Activated naive CD4-positive, alpha-beta T cell treated with anti-CD3 and anti-CD28 coated beads for 36 hours (primary cell): ENCODE measurements at regions of chr4 and their contacts with region 1.

Region 1: GRCh38 chr4:152771741-152772533 is 7.6 kb downstream of the TIGD4 start:
- DNase-seq: no peak
- H3K4me3 Mint-ChIP-seq: no peak overlapping the region
- H3K27ac Mint-ChIP-seq: no peak overlapping the region
- H3K4me1 Mint-ChIP-seq: no peaks in the 10 kb centered on the region
- H3K27me3 Mint-ChIP-seq: no peaks in the 10 kb centered on the region

Region 2: DNA sequence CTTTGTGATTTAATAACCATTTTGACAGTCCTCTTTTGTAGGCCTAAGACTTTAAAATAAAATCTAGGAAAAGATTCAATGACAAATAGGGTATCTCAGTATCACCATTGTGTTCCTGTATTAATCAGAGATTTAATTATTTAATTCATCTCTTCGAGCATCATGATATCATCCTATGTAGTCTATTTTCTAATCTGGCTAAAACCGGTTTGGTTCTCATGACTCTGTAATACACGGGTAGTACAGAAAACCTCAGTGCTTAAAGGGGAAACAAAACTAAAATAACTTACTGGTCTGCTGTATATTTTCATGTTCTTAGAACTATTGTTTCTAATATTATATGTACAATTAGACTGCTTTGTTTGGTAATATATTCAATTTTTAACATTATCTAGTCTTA is 212.3 kb before region 1 on chr4:
- CTCF ChIA-PET with region 1: no interaction called
- intact Hi-C with region 1: loop called (anchors 2 kb)
- DNase-seq: no peak
- H3K4me3 Mint-ChIP-seq: no peak overlapping the region
- H3K27ac Mint-ChIP-seq: no peak overlapping the region
- H3K4me1 Mint-ChIP-seq: peaks cover 15% of the 10 kb centered on the region
- H3K27me3 Mint-ChIP-seq: no peaks in the 10 kb centered on the region

Region 3: DNA sequence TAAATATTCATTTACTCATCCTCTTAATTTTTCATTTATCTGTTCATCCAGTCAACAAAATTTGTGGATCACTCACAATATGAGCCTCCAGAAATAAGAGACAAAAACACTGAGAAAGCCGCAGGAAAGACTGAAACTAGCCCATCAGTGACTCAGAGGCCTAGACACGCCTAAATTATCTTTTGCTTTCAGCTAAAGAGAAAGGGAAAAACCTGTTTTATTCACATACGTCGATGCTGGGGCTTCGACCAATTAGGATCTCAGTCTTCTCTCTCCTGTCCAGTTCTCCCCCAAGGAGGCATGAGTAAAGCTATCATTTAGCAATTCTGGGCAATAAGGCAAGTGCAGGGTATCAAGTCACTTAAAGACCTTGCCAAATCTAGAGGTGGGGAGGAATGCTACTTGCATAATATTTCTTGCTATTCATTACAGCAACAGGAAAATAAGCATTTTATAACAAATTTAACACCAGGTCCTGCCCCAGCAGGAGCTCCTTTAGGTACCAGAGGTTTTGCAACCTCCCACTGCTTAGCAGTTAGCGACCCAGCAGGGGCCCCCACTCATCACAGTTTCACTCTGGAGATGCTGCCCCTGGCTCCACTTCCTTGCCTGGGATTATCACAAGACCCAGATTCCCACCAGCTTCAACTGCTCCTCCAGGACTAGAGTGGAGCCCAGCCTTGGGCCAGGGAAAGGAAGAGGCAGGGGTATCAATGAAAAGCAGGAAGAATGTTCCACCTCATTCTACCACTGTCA is 62.1 kb before region 1 on chr4:
- CTCF ChIA-PET with region 1: no interaction called
- intact Hi-C with region 1: loop called (anchors 5 kb)
- DNase-seq: peak; percentile 12
- H3K4me3 Mint-ChIP-seq: no peak overlapping the region
- H3K27ac Mint-ChIP-seq: no peak overlapping the region
- H3K4me1 Mint-ChIP-seq: no peaks in the 10 kb centered on the region
- H3K27me3 Mint-ChIP-seq: no peaks in the 10 kb centered on the region

Region 4: GRCh38 chr4:153344131-153345010 is 572.4 kb after region 1 on chr4 and contains the start of gene MND1:
- CTCF ChIA-PET with region 1: no interaction called
- intact Hi-C with region 1: no loop called
- DNase-seq: peak; percentile 94
- H3K4me3 Mint-ChIP-seq: peak within 1 kb of the TSS; percentile 93
- H3K27ac Mint-ChIP-seq: peak within 1 kb of the TSS; percentile 92
- H3K4me1 Mint-ChIP-seq: peaks cover 33% of the 10 kb centered on the region
- H3K27me3 Mint-ChIP-seq: peaks cover 2% of the 10 kb centered on the region
- total RNA-seq, gene MND1: 51.3 to 52.6 TPM